Naive thymus-derived CD4-positive, alpha-beta T cell (primary cell): ENCODE measurements at regions of chr4 and their contacts with region 1.

Region 1: GRCh38 chr4:76251441-76252270 is at the start of gene FAM47E:
- DNase-seq: peak; percentile 7 to 34 (median 26)
- ATAC-seq: peak; percentile 86
- H3K4me3 ChIP-seq: peak within 1 kb of the TSS; percentile 51
- H3K4me3 Mint-ChIP-seq: peak within 1 kb of the TSS; percentile 73 to 89 (median 82)
- H3K27ac ChIP-seq: no peak within 1 kb of the TSS
- H3K27ac Mint-ChIP-seq: peak within 1 kb of the TSS in 1 of 9 donors; percentile 32
- H3K4me1 ChIP-seq: no peaks in the 10 kb centered on the region
- H3K4me1 Mint-ChIP-seq: peaks cover 4 to 10% (median 7%) of the 10 kb centered on the region in 7 donors
- H3K27me3 ChIP-seq: peaks cover 9 to 11% of the 10 kb centered on the region in 2 donors
- H3K27me3 Mint-ChIP-seq: peaks cover 69 to 83% (median 75%) of the 10 kb centered on the region in 5 donors
- total RNA-seq, gene FAM47E: 0.24 to 0.79 (median 0.43) TPM in 4 of 5 experiments, not detected in the other

Region 2: GRCh38 chr4:76179398-76180318 is 72.0 kb before region 1 on chr4:
- CTCF ChIA-PET with region 1: no interaction called
- POLR2A ChIA-PET with region 1: no interaction called
- intact Hi-C with region 1: loop called (anchors 2 to 10 kb)
- DNase-seq: peak; percentile 63 to 82 (median 72)
- ATAC-seq: peak; percentile 95
- H3K4me3 ChIP-seq: no peak overlapping the region
- H3K4me3 Mint-ChIP-seq: no peak overlapping the region
- H3K27ac ChIP-seq: no peak overlapping the region
- H3K27ac Mint-ChIP-seq: peak overlapping the region in 2 of 9 donors; percentile 27 to 53
- H3K4me1 ChIP-seq: no peaks in the 10 kb centered on the region
- H3K4me1 Mint-ChIP-seq: peaks cover 0 to 3% (median 0%) of the 10 kb centered on the region in 7 donors
- H3K27me3 ChIP-seq: no peaks in the 10 kb centered on the region
- H3K27me3 Mint-ChIP-seq: no peaks in the 10 kb centered on the region